Common myeloid progenitor, CD34-positive (primary cell): ENCODE measurements at regions of chr15 and their contacts with region 1.

Region 1: DNA sequence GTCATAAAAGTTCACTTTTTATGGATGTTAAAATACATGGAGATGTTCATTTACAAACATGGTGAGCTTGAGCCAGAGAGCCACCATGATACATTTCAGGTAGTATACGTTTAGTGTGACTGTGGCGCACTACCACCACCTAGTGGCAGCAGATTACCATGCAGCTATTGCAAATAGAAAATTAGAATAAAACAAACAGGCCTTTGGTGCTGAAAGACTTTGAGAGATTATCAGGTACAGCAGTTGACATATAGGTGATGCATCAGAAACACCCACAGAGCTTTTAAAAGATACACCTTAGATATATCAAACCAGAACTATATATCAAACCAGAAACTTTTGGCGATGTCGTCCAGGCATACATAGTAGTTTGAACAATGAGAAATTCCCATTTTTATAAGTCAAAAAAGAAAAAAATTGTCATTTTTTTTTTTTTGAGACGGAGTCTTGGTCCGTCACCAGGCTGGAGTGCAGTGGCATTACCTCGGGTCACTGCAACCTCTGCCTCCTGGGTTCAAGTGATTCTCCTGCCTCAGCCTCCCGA is 42.0 kb upstream of the ICE2 start:
- DNase-seq: peak; percentile 67 to 87 (median 81)
- H3K4me3 ChIP-seq: no peak overlapping the region
- H3K27ac ChIP-seq: no peak overlapping the region
- H3K4me1 ChIP-seq: peaks cover 0 to 2% (median 2%) of the 10 kb centered on the region in 4 experiments
- H3K27me3 ChIP-seq: no peaks in the 10 kb centered on the region

Region 2: GRCh38 chr15:60507596-60508424 is 13.1 kb before region 1 on chr15:
- CTCF ChIA-PET with region 1: interaction called, 56 read pairs
- POLR2A ChIA-PET with region 1: interaction called, 3 read pairs
- DNase-seq: peak; percentile 60 to 76 (median 75)
- H3K4me3 ChIP-seq: peak overlapping the region in 1 of 7 experiments; percentile 50
- H3K27ac ChIP-seq: no peak overlapping the region
- H3K4me1 ChIP-seq: peaks cover 0 to 7% (median 0%) of the 10 kb centered on the region in 4 experiments
- H3K27me3 ChIP-seq: no peaks in the 10 kb centered on the region

Region 3: DNA sequence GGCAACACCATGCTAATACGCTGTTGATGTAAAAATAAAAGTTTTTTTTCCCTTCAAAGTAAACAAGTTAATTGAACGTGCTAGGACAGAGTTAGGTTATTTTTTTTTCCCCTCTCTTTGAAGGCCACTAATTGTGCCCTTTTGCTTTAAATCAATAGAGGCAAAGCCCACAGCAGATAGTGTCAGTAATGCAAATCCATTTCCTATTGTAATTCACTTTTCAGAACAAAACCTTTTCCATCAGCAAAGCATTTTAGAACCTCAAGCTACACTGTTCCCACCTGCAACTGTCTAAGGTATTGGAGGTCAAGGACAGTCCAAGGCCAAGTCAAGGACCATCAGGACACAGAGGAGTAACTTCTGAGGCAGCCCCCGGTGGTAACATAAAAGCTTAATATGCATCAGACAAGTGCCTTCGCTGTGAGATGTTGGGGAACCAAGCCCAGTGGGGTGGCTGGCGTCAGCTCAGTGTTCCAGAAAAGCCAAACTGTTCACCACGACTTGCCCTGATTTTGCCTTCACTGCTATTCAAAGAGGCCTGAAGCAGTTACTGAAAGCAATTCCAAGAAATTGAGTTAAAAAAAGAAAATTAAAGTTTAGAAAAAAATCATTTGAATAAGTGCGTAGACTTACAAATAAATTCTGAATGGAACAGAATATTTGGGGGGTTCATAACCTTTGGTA is 23.8 kb after region 1 on chr15:
- CTCF ChIA-PET with region 1: no interaction called
- POLR2A ChIA-PET with region 1: no interaction called
- DNase-seq: no peak
- H3K4me3 ChIP-seq: no peak overlapping the region
- H3K27ac ChIP-seq: no peak overlapping the region
- H3K4me1 ChIP-seq: no peaks in the 10 kb centered on the region
- H3K27me3 ChIP-seq: no peaks in the 10 kb centered on the region